ENCODE measurements at regions of chr18 and their contacts with region 1.

Region 1: DNA sequence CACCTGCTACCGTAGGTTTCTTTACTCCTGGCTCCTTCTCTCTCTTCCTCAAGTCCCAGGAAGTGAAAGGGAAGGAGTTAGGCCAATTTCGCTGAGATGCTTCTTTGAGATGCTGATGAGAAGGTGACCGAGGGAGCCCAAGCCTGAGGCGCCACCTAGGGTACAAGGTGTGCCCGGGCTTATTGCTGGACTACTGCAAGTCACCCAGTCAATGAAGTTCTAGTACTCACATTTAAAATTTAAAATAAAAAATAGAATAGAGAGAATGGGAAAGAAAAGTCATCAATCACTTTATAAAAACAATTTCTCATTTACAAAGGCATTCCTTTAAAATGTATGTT is 45.3 kb downstream of the ACAA2 start:
- DNase-seq: peak; percentile 52
- ATAC-seq: no peak
- H3K4me3 Mint-ChIP-seq: no peak overlapping the region
- H3K27ac Mint-ChIP-seq: no peak overlapping the region
- H3K4me1 Mint-ChIP-seq: peaks cover 7% of the 10 kb centered on the region
- H3K27me3 Mint-ChIP-seq: no peaks in the 10 kb centered on the region

Region 2: DNA sequence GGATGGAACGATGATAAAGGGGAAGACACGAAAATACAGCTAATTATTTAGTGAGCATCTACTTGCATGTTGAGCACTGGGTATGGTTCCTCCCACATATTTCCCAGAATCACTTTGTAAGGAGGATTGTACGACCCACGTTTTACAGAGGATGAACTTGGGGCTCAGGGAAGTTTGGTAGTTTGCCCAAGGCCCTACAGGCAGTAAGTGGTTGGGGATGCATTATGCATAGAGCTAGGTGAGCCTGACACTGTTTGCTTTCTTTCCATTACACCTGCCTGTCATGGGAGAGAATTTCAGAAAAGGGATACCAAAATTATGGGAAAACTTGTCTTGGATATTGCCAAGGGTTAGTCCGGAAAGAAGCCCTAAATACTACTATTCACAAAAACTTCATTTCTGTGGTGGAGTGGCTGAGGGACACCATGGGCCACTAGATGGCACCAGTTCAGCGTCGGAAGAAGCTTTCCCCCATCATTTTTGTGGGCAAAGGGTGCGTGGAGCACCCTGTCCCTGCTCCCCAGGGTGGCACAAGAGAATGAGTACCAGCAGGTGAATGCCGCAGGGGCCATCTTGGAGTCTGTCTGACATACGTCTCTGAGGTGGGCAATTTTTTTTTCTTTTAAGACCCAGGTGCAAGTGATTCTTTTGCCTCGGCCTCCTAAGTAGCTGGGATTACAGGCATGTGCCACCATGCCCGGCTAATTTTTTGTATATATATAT is 257.5 kb before region 1 on chr18:
- CTCF ChIA-PET with region 1: interaction called, 6 read pairs
- POLR2A ChIA-PET with region 1: no interaction called
- intact Hi-C with region 1: loop called in 1 of 2 experiments (anchors 1 kb)
- DNase-seq: peak; percentile 70
- ATAC-seq: peak; percentile 61
- H3K4me3 Mint-ChIP-seq: no peak overlapping the region
- H3K27ac Mint-ChIP-seq: no peak overlapping the region
- H3K4me1 Mint-ChIP-seq: no peaks in the 10 kb centered on the region
- H3K27me3 Mint-ChIP-seq: peaks cover 10% of the 10 kb centered on the region

Region 3: GRCh38 chr18:49555641-49556040 is 212.4 kb before region 1 on chr18:
- CTCF ChIA-PET with region 1: no interaction called
- POLR2A ChIA-PET with region 1: no interaction called
- intact Hi-C with region 1: loop called in 1 of 2 experiments (anchors 5 kb)
- DNase-seq: no peak
- ATAC-seq: no peak
- H3K4me3 Mint-ChIP-seq: no peak overlapping the region
- H3K27ac Mint-ChIP-seq: no peak overlapping the region
- H3K4me1 Mint-ChIP-seq: peaks cover 3% of the 10 kb centered on the region
- H3K27me3 Mint-ChIP-seq: peaks cover 36% of the 10 kb centered on the region

Measured in activated CD4-positive, alpha-beta T cell treated with anti-CD3 and anti-CD28 coated beads for 36 hours (primary cell).